ENCODE measurements at regions of chr3 and their contacts with region 1.

Region 1: GRCh38 chr3:184117636-184118035 is 17.5 kb upstream of the EIF2B5 start:
- DNase-seq: peak; percentile 13
- H3K4me3 Mint-ChIP-seq: no peak overlapping the region
- H3K27ac Mint-ChIP-seq: no peak overlapping the region
- H3K4me1 Mint-ChIP-seq: no peaks in the 10 kb centered on the region
- H3K27me3 Mint-ChIP-seq: peaks cover 22% of the 10 kb centered on the region
- CTCF ChIP-seq: no peak

Region 2: GRCh38 chr3:183895296-183895695 is 222.3 kb before region 1 on chr3:
- CTCF ChIA-PET with region 1: interaction called, 3 read pairs
- POLR2A ChIA-PET with region 1: no interaction called
- intact Hi-C with region 1: loop called (anchors 2 kb)
- DNase-seq: peak; percentile 60
- H3K4me3 Mint-ChIP-seq: no peak overlapping the region
- H3K27ac Mint-ChIP-seq: no peak overlapping the region
- H3K4me1 Mint-ChIP-seq: no peaks in the 10 kb centered on the region
- H3K27me3 Mint-ChIP-seq: no peaks in the 10 kb centered on the region
- CTCF ChIP-seq: peak; percentile 82

Measured in MCF 10A (cell line).